ENCODE measurements at regions of chr6 and their contacts with region 1.

Region 1: DNA sequence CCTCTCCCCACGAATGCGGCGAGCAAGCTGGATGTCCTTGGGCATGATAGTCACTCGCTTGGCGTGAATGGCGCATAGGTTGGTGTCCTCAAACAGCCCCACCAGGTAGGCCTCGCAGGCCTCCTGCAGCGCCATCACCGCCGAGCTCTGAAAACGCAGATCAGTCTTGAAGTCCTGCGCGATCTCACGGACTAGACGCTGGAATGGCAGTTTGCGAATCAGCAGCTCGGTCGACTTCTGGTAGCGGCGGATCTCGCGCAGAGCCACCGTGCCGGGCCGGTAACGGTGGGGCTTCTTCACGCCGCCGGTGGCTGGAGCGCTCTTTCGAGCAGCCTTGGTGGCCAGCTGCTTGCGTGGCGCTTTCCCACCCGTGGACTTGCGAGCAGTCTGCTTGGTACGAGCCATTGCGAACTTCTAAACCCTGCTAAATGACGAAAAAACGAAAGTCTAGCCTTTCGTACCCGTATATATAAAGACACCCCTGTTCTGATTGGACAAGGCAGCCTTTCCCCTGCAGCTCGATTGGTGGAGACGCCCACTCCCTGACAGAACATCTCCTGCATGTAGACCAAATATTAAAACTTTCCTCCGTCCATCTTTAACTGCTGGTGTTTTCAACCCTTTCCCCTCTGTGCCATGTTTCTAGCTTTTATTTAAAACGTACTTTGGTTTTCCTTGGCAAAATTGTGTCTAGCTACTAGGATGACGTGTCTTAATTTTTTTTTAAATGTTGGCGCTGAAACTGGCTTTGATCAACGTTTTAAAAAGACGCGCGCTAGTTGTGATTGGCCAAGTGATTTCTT is 109.8 kb downstream of the HFE start:
- DNase-seq: peak; percentile 86
- H3K4me3 ChIP-seq: peak overlapping the region; percentile 88
- H3K27ac ChIP-seq: peak overlapping the region; percentile 91
- H3K27me3 ChIP-seq: no peaks in the 10 kb centered on the region
- CTCF ChIP-seq: no peak

Region 2: DNA sequence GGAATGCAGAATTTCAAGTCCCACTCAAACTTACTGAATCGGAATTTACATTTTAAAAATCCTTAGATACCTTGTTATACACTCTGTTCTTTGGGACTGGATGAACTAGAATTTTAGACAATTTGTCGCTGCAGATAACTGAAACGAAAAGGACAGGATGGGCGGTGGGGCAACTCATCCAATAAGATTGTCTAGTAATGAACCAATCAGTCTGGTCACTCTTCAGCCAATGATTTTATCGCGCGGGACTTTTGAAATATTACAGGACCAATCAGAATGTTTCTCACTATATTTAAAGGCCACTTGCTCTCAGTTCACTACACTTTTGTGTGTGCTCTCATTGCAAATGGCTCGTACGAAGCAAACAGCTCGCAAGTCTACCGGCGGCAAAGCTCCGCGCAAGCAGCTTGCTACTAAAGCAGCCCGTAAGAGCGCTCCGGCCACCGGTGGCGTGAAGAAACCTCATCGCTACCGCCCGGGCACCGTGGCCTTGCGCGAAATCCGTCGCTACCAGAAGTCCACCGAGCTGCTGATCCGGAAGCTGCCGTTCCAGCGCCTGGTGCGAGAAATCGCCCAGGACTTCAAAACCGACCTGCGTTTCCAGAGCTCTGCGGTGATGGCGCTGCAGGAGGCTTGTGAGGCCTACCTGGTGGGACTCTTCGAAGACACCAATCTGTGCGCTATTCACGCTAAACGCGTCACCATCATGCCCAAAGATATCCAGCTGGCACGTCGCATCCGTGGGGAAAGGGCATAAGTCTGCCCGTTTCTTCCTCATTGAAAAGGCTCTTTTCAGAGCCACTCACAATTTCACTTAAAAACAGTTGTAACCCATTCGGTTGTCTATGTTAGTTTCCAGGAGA is 151.8 kb before region 1 on chr6:
- CTCF ChIA-PET with region 1: no interaction called
- POLR2A ChIA-PET with region 1: interaction called, 12 read pairs
- DNase-seq: peak; percentile 82
- H3K4me3 ChIP-seq: peak overlapping the region; percentile 66
- H3K27ac ChIP-seq: peak overlapping the region; percentile 63
- H3K27me3 ChIP-seq: no peaks in the 10 kb centered on the region
- CTCF ChIP-seq: peak; percentile 19; the same call in 1 of the 2 replicates

Region 3: GRCh38 chr6:26065952-26066380 is 131.1 kb before region 1 on chr6:
- CTCF ChIA-PET with region 1: interaction called, 14 read pairs
- POLR2A ChIA-PET with region 1: no interaction called
- DNase-seq: peak; percentile 62
- H3K4me3 ChIP-seq: no peak overlapping the region
- H3K27ac ChIP-seq: no peak overlapping the region
- H3K27me3 ChIP-seq: no peaks in the 10 kb centered on the region
- CTCF ChIP-seq: peak; percentile 91

Region 4: GRCh38 chr6:26183581-26184366 is 13.3 kb before region 1 on chr6:
- CTCF ChIA-PET with region 1: interaction called, 5 read pairs
- POLR2A ChIA-PET with region 1: interaction called, 83 read pairs
- DNase-seq: peak; percentile 72
- H3K4me3 ChIP-seq: peak overlapping the region; percentile 61
- H3K27ac ChIP-seq: peak overlapping the region; percentile 71
- H3K27me3 ChIP-seq: no peaks in the 10 kb centered on the region
- CTCF ChIP-seq: no peak

Region 5: DNA sequence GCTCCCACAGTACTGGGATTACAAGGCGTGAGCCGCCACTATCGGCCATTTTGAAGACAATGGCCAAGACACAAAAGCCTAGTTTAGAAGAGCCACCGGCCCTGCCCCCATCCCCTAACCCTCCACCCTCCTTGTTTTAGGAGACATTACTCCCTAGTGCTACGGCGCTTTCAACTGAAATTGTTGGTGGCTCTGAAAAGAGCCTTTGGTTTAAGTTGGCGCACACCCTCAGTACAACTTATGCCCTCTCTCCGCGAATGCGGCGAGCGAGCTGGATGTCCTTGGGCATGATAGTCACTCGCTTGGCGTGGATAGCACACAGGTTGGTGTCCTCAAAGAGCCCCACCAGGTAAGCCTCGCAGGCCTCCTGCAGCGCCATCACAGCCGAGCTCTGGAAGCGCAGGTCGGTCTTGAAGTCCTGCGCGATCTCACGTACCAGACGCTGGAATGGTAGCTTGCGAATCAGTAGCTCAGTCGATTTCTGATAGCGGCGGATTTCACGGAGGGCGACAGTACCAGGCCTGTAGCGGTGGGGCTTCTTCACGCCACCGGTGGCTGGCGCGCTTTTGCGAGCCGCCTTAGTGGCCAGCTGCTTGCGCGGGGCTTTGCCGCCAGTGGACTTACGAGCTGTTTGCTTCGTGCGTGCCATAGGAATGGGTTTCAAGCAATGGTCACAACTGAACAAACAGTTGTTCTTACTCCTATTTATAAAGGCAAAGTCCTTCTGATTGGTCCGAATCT is 53.1 kb after region 1 on chr6:
- CTCF ChIA-PET with region 1: no interaction called
- POLR2A ChIA-PET with region 1: interaction called, 14 read pairs
- DNase-seq: no peak
- H3K4me3 ChIP-seq: peak overlapping the region; percentile 77
- H3K27ac ChIP-seq: peak overlapping the region; percentile 87
- H3K27me3 ChIP-seq: no peaks in the 10 kb centered on the region
- CTCF ChIP-seq: peak; percentile 50

Region 6: GRCh38 chr6:26295691-26296555 is 98.9 kb after region 1 on chr6:
- CTCF ChIA-PET with region 1: no interaction called
- POLR2A ChIA-PET with region 1: no interaction called
- DNase-seq: no peak
- H3K4me3 ChIP-seq: no peak overlapping the region
- H3K27ac ChIP-seq: peak overlapping the region; percentile 49
- H3K27me3 ChIP-seq: no peaks in the 10 kb centered on the region
- CTCF ChIP-seq: no peak

Measured in AG04450 (cell line).